Heart right ventricle (tissue), 16 donors: ENCODE measurements at regions of chr17 and their contacts with region 1.

Region 1: GRCh38 chr17:58277107-58277801 is 3.5 kb downstream of the MPO start:
- DNase-seq: no peak
- ATAC-seq: no peak
- H3K4me3 ChIP-seq: no peak overlapping the region
- H3K27ac ChIP-seq: no peak overlapping the region
- H3K4me1 ChIP-seq: peaks cover 0 to 23% (median 11%) of the 10 kb centered on the region in 9 donors
- H3K27me3 ChIP-seq: peaks cover 0 to 49% (median 22%) of the 10 kb centered on the region in 7 donors
- CTCF ChIP-seq: peak in 5 of 9 donors; percentile 21 to 47 (median 31)

Region 2: DNA sequence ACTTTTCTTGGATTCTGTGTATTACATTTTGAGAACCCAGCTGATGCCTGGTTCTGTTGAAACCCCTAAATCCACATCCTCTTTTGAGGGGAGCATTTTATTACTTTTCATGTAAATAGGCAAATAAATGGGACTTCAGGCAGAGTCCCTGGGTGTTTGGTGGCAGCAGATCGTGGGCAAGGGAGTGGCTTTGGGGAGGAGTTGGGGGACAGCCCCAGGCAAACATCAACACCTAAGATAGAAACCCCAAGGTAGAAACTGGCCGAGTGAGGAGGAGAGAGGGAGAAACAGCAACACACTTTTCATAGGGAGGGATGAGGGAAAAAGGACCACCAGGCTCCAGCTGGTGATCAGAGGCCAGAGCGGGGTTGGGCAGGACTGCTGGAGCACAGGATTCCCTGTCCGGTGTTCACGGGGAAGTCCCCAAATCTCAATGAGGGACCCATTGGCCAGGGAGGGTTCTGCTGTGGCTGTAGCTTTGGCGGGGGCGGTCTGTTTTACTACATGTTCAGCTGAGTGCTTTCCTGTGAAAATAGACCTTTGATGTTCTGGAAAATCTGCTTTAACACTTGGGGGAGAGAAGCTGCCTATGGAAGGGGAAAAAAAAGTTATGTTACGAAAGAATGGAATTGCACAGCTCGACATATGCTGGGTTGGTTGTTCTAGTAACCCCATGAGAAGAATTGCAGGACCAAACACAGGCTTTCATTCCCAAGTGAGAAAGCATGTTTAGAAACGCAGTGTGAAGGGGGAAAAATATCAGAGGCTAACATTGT is 974.4 kb before region 1 on chr17:
- intact Hi-C with region 1: loop called in 1 of 10 experiments (anchors 5 kb)
- DNase-seq: no peak
- ATAC-seq: peak in 1 of 8 donors; percentile 15
- H3K4me3 ChIP-seq: no peak overlapping the region
- H3K27ac ChIP-seq: no peak overlapping the region
- H3K4me1 ChIP-seq: peaks cover 0 to 22% (median 0%) of the 10 kb centered on the region in 9 donors
- H3K27me3 ChIP-seq: no peaks in the 10 kb centered on the region
- CTCF ChIP-seq: no peak

Region 3: GRCh38 chr17:58463821-58464220 is 186.6 kb after region 1 on chr17:
- intact Hi-C with region 1: no loop called
- DNase-seq: no peak
- ATAC-seq: no peak
- H3K4me3 ChIP-seq: no peak overlapping the region
- H3K27ac ChIP-seq: no peak overlapping the region
- H3K4me1 ChIP-seq: no peaks in the 10 kb centered on the region
- H3K27me3 ChIP-seq: peaks cover 0 to 36% (median 4%) of the 10 kb centered on the region in 7 donors
- CTCF ChIP-seq: no peak